CD4-positive, alpha-beta T cell (primary cell): ENCODE measurements at regions of chr2 and their contacts with region 1.

Region 1: GRCh38 chr2:197113275-197113711 is 186.8 kb upstream of the PGAP1 start:
- DNase-seq: peak in 3 of 14 experiments; percentile 56 to 70 (median 69)
- ATAC-seq: peak; percentile 60
- H3K4me3 ChIP-seq: no peak overlapping the region
- H3K4me3 Mint-ChIP-seq: no peak overlapping the region
- H3K27ac ChIP-seq: peak overlapping the region in 1 of 2 donors; percentile 38
- H3K27ac Mint-ChIP-seq: peak overlapping the region; percentile 83
- H3K4me1 ChIP-seq: peaks cover 1% of the 10 kb centered on the region
- H3K4me1 Mint-ChIP-seq: peaks cover 36% of the 10 kb centered on the region
- H3K27me3 ChIP-seq: no peaks in the 10 kb centered on the region
- H3K27me3 Mint-ChIP-seq: no peaks in the 10 kb centered on the region
- CTCF ChIP-seq: peak; percentile 81

Region 2: DNA sequence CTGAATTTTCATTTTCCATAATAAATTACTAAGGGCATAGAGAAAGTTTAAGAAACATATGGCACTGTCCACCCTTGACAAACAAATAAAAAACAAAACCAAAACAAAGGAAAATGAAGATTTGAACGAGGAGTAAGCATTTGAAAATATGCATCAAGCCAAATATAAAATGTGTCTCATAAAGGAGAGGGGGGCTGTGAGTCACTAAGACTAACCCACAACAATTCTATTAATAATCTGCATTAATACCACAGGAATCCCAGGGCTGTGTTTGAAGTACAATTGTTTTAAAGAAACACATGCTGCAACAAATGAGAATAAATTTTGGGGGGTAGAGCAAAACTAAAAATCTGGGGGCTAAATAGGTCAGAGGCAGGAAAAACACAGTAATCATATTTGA is 888.1 kb before region 1 on chr2:
- CTCF ChIA-PET with region 1: no interaction called
- POLR2A ChIA-PET with region 1: no interaction called
- intact Hi-C with region 1: no loop called
- DNase-seq: no peak
- ATAC-seq: no peak
- H3K4me3 ChIP-seq: no peak overlapping the region
- H3K4me3 Mint-ChIP-seq: peak overlapping the region; percentile 7
- H3K27ac ChIP-seq: no peak overlapping the region
- H3K27ac Mint-ChIP-seq: peak overlapping the region; percentile 46
- H3K4me1 ChIP-seq: peaks cover 30% of the 10 kb centered on the region
- H3K4me1 Mint-ChIP-seq: peaks cover 89% of the 10 kb centered on the region
- H3K27me3 ChIP-seq: no peaks in the 10 kb centered on the region
- H3K27me3 Mint-ChIP-seq: no peaks in the 10 kb centered on the region
- CTCF ChIP-seq: no peak

Region 3: GRCh38 chr2:196586511-196586991 is 526.7 kb before region 1 on chr2:
- CTCF ChIA-PET with region 1: no interaction called
- POLR2A ChIA-PET with region 1: no interaction called
- intact Hi-C with region 1: no loop called
- DNase-seq: no peak
- ATAC-seq: no peak
- H3K4me3 ChIP-seq: no peak overlapping the region
- H3K4me3 Mint-ChIP-seq: no peak overlapping the region
- H3K27ac ChIP-seq: no peak overlapping the region
- H3K27ac Mint-ChIP-seq: no peak overlapping the region
- H3K4me1 ChIP-seq: no peaks in the 10 kb centered on the region
- H3K4me1 Mint-ChIP-seq: no peaks in the 10 kb centered on the region
- H3K27me3 ChIP-seq: peaks cover 18 to 37% of the 10 kb centered on the region in 2 experiments
- H3K27me3 Mint-ChIP-seq: peaks cover 59% of the 10 kb centered on the region
- CTCF ChIP-seq: no peak

Region 4: GRCh38 chr2:197130318-197130717 is 17.0 kb after region 1 on chr2:
- CTCF ChIA-PET with region 1: interaction called, 10 read pairs
- POLR2A ChIA-PET with region 1: interaction called, 4 read pairs
- intact Hi-C with region 1: loop called in 1 of 2 experiments (anchors 2 kb)
- DNase-seq: peak in 4 of 14 experiments; percentile 27 to 56 (median 56)
- ATAC-seq: peak; percentile 94
- H3K4me3 ChIP-seq: no peak overlapping the region
- H3K4me3 Mint-ChIP-seq: peak overlapping the region; percentile 11
- H3K27ac ChIP-seq: peak overlapping the region in 1 of 2 donors; percentile 49
- H3K27ac Mint-ChIP-seq: peak overlapping the region; percentile 85
- H3K4me1 ChIP-seq: peaks cover 37% of the 10 kb centered on the region
- H3K4me1 Mint-ChIP-seq: peaks cover 92% of the 10 kb centered on the region
- H3K27me3 ChIP-seq: no peaks in the 10 kb centered on the region
- H3K27me3 Mint-ChIP-seq: no peaks in the 10 kb centered on the region
- CTCF ChIP-seq: no peak

Region 5: GRCh38 chr2:197137231-197137630 is 23.9 kb after region 1 on chr2:
- CTCF ChIA-PET with region 1: interaction called, 5 read pairs
- POLR2A ChIA-PET with region 1: interaction called, 5 read pairs
- intact Hi-C with region 1: loop called in 1 of 2 experiments (anchors 2 kb)
- DNase-seq: peak in 3 of 14 experiments; percentile 27 to 33 (median 29)
- ATAC-seq: no peak
- H3K4me3 ChIP-seq: no peak overlapping the region
- H3K4me3 Mint-ChIP-seq: peak overlapping the region; percentile 8
- H3K27ac ChIP-seq: peak overlapping the region in 1 of 2 donors; percentile 58
- H3K27ac Mint-ChIP-seq: peak overlapping the region; percentile 85
- H3K4me1 ChIP-seq: peaks cover 60% of the 10 kb centered on the region
- H3K4me1 Mint-ChIP-seq: peaks cover 97% of the 10 kb centered on the region
- H3K27me3 ChIP-seq: no peaks in the 10 kb centered on the region
- H3K27me3 Mint-ChIP-seq: no peaks in the 10 kb centered on the region
- CTCF ChIP-seq: no peak

Region 6: DNA sequence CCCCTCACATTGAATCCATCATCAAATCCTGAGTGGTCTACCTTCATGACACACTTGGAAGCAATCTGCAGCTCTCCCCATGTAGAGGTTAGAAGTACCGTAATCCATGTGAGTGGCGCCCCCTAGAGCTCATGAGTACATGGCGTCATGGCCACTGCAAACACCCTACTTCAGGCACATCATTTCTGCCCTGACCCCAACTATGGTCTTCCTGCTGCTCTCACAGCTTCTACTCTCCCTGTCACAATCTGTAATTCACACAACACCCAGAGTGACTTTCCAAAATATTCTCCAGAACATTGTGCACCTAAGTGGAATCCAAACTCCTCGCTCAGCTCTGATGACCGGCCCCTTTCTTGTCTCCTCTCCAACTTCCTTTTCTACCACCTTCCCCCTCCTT is 55.4 kb after region 1 on chr2:
- CTCF ChIA-PET with region 1: interaction called, 28 read pairs
- POLR2A ChIA-PET with region 1: interaction called, 10 read pairs
- intact Hi-C with region 1: loop called (anchors 1 to 5 kb)
- DNase-seq: peak; percentile 51 to 83 (median 66)
- ATAC-seq: peak; percentile 92
- H3K4me3 ChIP-seq: no peak overlapping the region
- H3K4me3 Mint-ChIP-seq: peak overlapping the region; percentile 2
- H3K27ac ChIP-seq: peak overlapping the region in 1 of 2 donors; percentile 15
- H3K27ac Mint-ChIP-seq: peak overlapping the region; percentile 71
- H3K4me1 ChIP-seq: peaks cover 52% of the 10 kb centered on the region
- H3K4me1 Mint-ChIP-seq: peaks cover 80% of the 10 kb centered on the region
- H3K27me3 ChIP-seq: no peaks in the 10 kb centered on the region
- H3K27me3 Mint-ChIP-seq: no peaks in the 10 kb centered on the region
- CTCF ChIP-seq: peak; percentile 60

Region 7: DNA sequence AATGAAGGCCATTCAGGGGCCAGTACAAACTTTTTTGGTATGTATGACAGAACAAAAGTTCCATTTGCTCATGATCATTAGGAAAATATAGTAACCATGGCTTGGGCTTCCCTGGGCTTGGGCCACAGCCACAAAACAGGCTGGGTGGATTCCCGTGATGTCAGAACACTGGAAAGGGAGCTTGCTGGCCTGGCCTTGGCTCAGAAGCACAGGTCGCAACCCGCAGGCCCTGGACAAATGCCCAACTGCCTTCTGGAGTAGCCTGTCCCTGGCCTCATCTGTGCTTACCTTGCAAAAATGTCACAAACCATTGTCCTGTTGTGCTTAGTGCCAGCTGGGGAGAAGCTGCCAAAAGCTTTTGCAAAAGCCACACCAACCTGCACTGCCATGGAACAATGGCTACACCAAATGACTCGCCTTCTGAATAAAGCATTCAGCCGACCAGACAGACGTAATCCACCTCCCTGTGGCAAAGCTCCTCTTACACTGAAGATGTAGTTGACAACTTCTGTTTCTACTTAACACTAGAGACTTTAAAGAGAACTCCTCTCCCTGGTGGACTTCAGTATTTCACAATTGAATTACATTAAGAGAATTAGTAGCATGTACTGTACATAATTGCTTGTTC is 71.8 kb after region 1 on chr2:
- CTCF ChIA-PET with region 1: interaction called, 19 read pairs
- POLR2A ChIA-PET with region 1: no interaction called
- intact Hi-C with region 1: loop called (anchors 2 to 5 kb)
- DNase-seq: no peak
- ATAC-seq: no peak
- H3K4me3 ChIP-seq: no peak overlapping the region
- H3K4me3 Mint-ChIP-seq: no peak overlapping the region
- H3K27ac ChIP-seq: no peak overlapping the region
- H3K27ac Mint-ChIP-seq: peak overlapping the region; percentile 70
- H3K4me1 ChIP-seq: peaks cover 30% of the 10 kb centered on the region
- H3K4me1 Mint-ChIP-seq: peaks cover 95% of the 10 kb centered on the region
- H3K27me3 ChIP-seq: no peaks in the 10 kb centered on the region
- H3K27me3 Mint-ChIP-seq: no peaks in the 10 kb centered on the region
- CTCF ChIP-seq: no peak

Region 8: DNA sequence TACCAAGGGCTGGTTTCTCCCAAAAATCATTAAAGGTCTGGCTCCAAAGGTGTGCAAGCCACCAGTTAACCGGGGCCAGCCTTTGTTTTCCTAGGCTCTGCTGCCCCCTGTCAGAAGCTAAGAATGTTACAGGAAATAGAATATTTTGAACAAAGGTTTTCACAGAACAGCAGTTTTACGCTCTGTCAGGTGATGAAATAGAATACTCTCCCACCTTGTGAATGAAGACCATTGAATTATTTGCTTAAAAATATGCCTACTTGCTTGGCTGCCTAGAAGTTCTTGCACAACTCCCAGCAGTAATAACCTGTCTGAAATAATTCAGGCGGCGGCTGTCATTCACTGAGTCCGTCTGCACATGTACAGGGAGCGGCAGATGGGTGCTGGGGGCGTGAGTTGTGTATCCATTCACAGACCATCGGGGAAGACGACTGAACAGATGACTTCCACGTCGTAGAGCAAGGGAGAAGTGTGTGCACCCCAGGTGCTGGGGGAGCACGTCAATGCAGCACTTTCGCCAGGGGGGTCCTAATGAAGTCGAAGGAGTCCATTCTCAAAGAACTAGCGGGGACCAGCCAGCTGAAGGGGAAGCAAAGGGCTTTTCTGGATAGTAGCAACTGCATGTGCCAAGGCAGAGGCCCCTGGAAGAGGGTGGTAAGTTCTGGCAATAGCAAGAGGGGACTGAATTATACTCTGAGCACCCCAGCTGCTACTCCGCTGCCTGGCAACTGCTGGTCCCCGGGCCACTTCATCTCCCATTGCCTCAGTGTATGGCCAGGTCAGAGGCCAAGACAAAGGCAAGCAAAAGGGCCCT is 265.4 kb after region 1 on chr2:
- CTCF ChIA-PET with region 1: interaction called, 29 read pairs
- POLR2A ChIA-PET with region 1: interaction called, 4 read pairs
- intact Hi-C with region 1: loop called (anchors 1 kb)
- DNase-seq: peak; percentile 39 to 80 (median 58)
- ATAC-seq: peak; percentile 71
- H3K4me3 ChIP-seq: no peak overlapping the region
- H3K4me3 Mint-ChIP-seq: no peak overlapping the region
- H3K27ac ChIP-seq: no peak overlapping the region
- H3K27ac Mint-ChIP-seq: no peak overlapping the region
- H3K4me1 ChIP-seq: peaks cover 7% of the 10 kb centered on the region
- H3K4me1 Mint-ChIP-seq: peaks cover 21% of the 10 kb centered on the region
- H3K27me3 ChIP-seq: no peaks in the 10 kb centered on the region
- H3K27me3 Mint-ChIP-seq: no peaks in the 10 kb centered on the region
- CTCF ChIP-seq: peak; percentile 83

Region 9: GRCh38 chr2:197657562-197657961 is 544.3 kb after region 1 on chr2:
- CTCF ChIA-PET with region 1: no interaction called
- POLR2A ChIA-PET with region 1: no interaction called
- intact Hi-C with region 1: no loop called
- DNase-seq: no peak
- ATAC-seq: no peak
- H3K4me3 ChIP-seq: no peak overlapping the region
- H3K4me3 Mint-ChIP-seq: no peak overlapping the region
- H3K27ac ChIP-seq: no peak overlapping the region
- H3K27ac Mint-ChIP-seq: no peak overlapping the region
- H3K4me1 ChIP-seq: no peaks in the 10 kb centered on the region
- H3K4me1 Mint-ChIP-seq: no peaks in the 10 kb centered on the region
- H3K27me3 ChIP-seq: no peaks in the 10 kb centered on the region
- H3K27me3 Mint-ChIP-seq: no peaks in the 10 kb centered on the region
- CTCF ChIP-seq: no peak